ENCODE measurements at regions of chr12 and their contacts with region 1.

Region 1: GRCh38 chr12:75334384-75335030 is at the start of gene GLIPR1L1:
- DNase-seq: peak; percentile 80
- CTCF ChIP-seq: peak; percentile 77

Region 2: DNA sequence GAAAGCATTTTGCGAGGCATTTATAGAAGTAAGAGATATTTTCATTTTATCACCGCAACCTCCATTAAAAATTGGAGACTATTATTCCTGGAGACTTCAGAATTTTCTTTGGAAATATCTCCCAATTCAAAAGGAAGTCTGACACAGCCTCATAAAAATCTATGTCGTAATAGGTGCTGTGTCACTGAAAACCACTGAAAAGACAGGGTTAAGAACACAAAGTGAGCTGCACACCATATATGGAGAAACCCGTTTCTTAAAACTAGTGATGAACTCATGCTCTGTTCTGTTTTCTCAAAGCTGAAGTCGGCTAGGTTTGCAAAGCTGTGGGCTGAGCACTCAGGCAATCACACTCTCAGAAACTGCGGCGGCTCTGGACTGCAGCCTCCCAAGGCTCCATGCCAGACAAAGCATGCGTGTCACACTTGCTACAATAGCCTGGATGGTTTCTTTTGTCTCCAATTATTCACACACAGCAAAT is 146.0 kb after region 1 on chr12 and contains the start of gene GLIPR1:
- in situ Hi-C with region 1: loop called (anchors 10 kb)
- DNase-seq: peak; percentile 69
- CTCF ChIP-seq: no peak

Region 3: GRCh38 chr12:76031537-76032073 is 697.1 kb after region 1 on chr12 and contains the start of gene PHLDA1:
- in situ Hi-C with region 1: loop called (anchors 25 kb)
- DNase-seq: peak; percentile 94
- CTCF ChIP-seq: peak; percentile 60

Measured in GM13976 (cell line).